ENCODE measurements at regions of chr10 and their contacts with region 1.

Region 1: DNA sequence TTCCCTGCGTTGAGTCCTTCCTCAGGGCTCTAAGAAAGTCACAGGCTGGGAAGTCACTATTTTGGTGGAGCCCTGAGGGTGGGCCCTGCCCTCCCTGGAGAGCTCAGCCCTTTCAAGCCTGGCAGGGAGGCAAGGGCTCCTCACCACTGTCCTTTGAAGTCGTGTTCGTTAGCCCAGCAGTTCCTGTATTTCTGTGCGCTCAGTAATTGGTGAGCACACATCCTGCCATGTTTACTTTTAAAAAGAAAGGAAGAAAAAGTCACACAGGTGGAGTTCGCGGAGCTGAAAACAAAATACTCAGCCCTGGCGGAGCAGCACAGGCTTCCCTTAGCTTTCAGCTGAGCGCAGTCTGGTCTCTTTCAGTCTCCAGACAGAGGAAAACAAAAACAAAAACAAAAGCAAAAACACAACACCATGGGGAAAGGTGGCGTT is 37.1 kb downstream of the PRKCQ start:
- DNase-seq: peak; percentile 58
- ATAC-seq: peak; percentile 62
- H3K4me3 Mint-ChIP-seq: peak overlapping the region; percentile 75
- H3K27ac Mint-ChIP-seq: peak overlapping the region; percentile 96
- H3K4me1 Mint-ChIP-seq: peaks cover 76% of the 10 kb centered on the region
- H3K27me3 Mint-ChIP-seq: no peaks in the 10 kb centered on the region

Region 2: GRCh38 chr10:6473901-6474370 is 69.1 kb before region 1 on chr10:
- CTCF ChIA-PET with region 1: interaction called, 6 read pairs
- POLR2A ChIA-PET with region 1: no interaction called
- intact Hi-C with region 1: loop called (anchors 1 kb)
- DNase-seq: peak; percentile 53
- ATAC-seq: peak; percentile 82
- H3K4me3 Mint-ChIP-seq: peak overlapping the region; percentile 72
- H3K27ac Mint-ChIP-seq: peak overlapping the region; percentile 99
- H3K4me1 Mint-ChIP-seq: peaks cover 59% of the 10 kb centered on the region
- H3K27me3 Mint-ChIP-seq: no peaks in the 10 kb centered on the region

Region 3: DNA sequence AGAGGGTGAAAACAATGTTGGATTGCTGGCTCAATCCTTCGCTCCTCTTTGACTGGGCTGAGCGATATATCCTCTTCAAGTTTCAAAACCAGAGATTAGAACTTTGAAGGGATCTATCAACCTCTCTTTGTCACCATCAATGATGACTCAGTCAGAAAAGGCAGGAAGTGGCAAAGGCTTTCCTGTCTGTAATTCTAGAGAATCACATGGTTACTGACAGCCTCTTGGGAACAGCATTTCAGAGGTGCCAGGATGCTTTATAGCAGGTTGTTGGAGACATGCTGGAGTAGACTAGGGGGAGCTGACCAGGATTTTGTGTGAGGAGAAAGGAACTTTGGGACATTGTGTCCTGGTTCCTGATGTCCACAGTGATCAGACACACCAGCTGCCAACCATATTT is 44.2 kb before region 1 on chr10:
- CTCF ChIA-PET with region 1: interaction called, 3 read pairs
- POLR2A ChIA-PET with region 1: no interaction called
- intact Hi-C with region 1: loop called (anchors 1 kb)
- DNase-seq: peak; percentile 47
- ATAC-seq: peak; percentile 79
- H3K4me3 Mint-ChIP-seq: peak overlapping the region; percentile 46
- H3K27ac Mint-ChIP-seq: peak overlapping the region; percentile 89
- H3K4me1 Mint-ChIP-seq: peaks cover 52% of the 10 kb centered on the region
- H3K27me3 Mint-ChIP-seq: no peaks in the 10 kb centered on the region

Region 4: DNA sequence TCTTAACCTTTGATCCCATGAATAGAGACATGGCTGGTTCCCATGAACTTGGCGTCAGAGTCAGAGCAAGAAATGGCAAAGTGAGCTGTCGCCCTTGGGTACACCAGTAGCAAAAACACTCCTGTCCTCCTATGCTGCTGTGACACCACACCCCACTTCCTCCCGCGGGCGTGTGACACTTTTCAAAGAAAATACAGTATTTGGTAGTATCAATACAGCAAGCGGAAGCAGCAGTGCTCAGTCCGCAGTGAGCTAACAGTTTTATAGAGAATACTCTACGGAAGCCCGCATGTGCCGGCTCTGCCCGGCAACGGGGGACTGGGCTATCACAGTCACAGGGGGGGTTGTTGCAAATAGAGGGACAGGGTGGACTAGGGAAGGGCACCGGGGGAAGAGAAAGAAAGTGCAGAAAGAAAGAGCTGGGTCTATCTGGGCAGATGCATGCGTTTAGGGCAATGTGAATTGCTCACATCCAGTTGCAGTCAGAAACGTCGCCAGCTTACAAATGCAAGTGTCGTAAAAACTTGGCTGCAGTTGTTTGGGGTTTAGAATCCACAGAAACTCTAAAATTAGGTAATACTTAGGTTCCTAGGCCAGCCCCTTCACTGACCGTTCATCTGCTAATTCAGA is 12.7 kb before region 1 on chr10:
- CTCF ChIA-PET with region 1: interaction called, 13 read pairs
- POLR2A ChIA-PET with region 1: interaction called, 11 read pairs
- intact Hi-C with region 1: loop called (anchors 1 kb)
- DNase-seq: peak; percentile 88
- ATAC-seq: peak; percentile 93
- H3K4me3 Mint-ChIP-seq: peak overlapping the region; percentile 78
- H3K27ac Mint-ChIP-seq: peak overlapping the region; percentile 98
- H3K4me1 Mint-ChIP-seq: peaks cover 79% of the 10 kb centered on the region
- H3K27me3 Mint-ChIP-seq: no peaks in the 10 kb centered on the region

Region 5: DNA sequence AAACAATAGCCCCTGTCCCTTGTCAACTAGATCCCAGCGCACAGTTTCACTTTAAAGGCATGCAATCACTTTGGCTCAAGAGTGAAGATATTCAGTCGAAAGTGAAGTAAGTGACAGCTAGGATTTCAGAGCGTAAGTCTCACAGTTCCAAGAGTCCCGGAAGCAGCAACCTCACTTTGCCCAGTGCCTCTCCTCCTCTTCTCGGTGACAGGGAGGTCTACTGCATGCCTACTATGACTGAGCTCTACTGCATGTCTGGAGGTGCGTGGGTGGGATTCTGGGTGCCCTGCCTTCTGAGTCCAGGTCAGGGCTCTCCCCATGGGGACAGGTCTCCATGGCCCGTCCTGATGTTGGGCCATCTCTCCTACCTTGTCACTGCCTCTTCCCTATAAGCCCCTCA is 20.1 kb after region 1 on chr10:
- CTCF ChIA-PET with region 1: interaction called, 8 read pairs
- POLR2A ChIA-PET with region 1: no interaction called
- intact Hi-C with region 1: loop called (anchors 1 to 2 kb)
- DNase-seq: peak; percentile 85
- ATAC-seq: peak; percentile 87
- H3K4me3 Mint-ChIP-seq: peak overlapping the region; percentile 69
- H3K27ac Mint-ChIP-seq: peak overlapping the region; percentile 81
- H3K4me1 Mint-ChIP-seq: peaks cover 92% of the 10 kb centered on the region
- H3K27me3 Mint-ChIP-seq: no peaks in the 10 kb centered on the region